Adrenal gland (tissue), 19 donors: ENCODE measurements at regions of chr4 and their contacts with region 1.

Region 1: DNA sequence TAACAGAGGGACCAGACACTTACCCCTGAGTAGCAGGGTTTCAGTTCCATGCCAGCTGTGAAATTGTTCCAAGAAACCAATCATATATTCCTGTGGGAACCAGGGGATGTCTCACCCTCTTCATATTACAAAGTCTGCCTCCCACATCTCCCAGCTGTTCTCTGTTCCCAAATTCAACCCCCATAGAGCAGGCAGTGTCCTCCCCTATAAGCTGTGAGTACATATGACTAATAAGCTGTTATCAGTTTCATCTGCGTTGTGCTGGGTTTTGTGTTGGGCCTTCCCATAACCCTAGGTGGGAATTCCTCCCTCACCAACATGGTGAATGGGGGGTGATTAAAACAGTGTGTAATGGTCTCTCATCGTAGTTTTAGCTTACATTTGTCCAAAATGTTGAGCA is 41.0 kb downstream of the CEP44 start:
- DNase-seq: no peak
- H3K4me3 ChIP-seq: no peak overlapping the region
- H3K27ac ChIP-seq: no peak overlapping the region
- H3K4me1 ChIP-seq: no peaks in the 10 kb centered on the region
- H3K27me3 ChIP-seq: no peaks in the 10 kb centered on the region
- CTCF ChIP-seq: no peak
- POLR2A ChIP-seq: no peak

Region 2: GRCh38 chr4:174225349-174226049 is 99.2 kb before region 1 on chr4:
- intact Hi-C with region 1: loop called in 1 of 2 experiments (anchors 5 kb)
- DNase-seq: no peak
- H3K4me3 ChIP-seq: no peak overlapping the region
- H3K27ac ChIP-seq: no peak overlapping the region
- H3K4me1 ChIP-seq: no peaks in the 10 kb centered on the region
- H3K27me3 ChIP-seq: no peaks in the 10 kb centered on the region
- CTCF ChIP-seq: no peak
- POLR2A ChIP-seq: no peak